Naive thymus-derived CD4-positive, alpha-beta T cell (primary cell): ENCODE measurements at regions of chr13 and their contacts with region 1.

Region 1: DNA sequence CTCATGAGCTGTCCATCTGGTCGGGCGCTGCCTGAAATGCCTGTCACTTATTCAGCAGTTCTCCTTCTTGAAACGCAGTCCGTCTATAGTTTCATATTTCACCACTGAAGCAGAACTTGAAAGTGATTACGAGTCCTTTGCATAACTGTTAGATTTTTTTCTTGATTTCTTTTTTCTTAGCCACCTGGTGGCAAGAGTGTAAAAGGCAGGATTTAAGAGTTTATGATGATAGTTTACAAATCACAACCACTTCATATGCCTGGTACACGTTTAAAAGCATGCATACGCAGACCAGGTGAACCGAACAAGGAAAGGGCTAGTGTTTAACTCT is 45.8 kb downstream of the GGACT start:
- DNase-seq: peak in 7 of 9 donors; percentile 19 to 58 (median 51)
- ATAC-seq: peak; percentile 76
- H3K4me3 ChIP-seq: no peak overlapping the region
- H3K4me3 Mint-ChIP-seq: peak overlapping the region in 9 of 10 donors; percentile 10 to 81 (median 55)
- H3K27ac ChIP-seq: no peak overlapping the region
- H3K27ac Mint-ChIP-seq: peak overlapping the region in 1 of 9 donors; percentile 19
- H3K4me1 ChIP-seq: peaks cover 0 to 22% of the 10 kb centered on the region in 2 donors
- H3K4me1 Mint-ChIP-seq: peaks cover 7 to 48% (median 31%) of the 10 kb centered on the region in 7 donors
- H3K27me3 ChIP-seq: no peaks in the 10 kb centered on the region
- H3K27me3 Mint-ChIP-seq: peaks cover 0 to 3% (median 0%) of the 10 kb centered on the region in 5 donors

Region 2: DNA sequence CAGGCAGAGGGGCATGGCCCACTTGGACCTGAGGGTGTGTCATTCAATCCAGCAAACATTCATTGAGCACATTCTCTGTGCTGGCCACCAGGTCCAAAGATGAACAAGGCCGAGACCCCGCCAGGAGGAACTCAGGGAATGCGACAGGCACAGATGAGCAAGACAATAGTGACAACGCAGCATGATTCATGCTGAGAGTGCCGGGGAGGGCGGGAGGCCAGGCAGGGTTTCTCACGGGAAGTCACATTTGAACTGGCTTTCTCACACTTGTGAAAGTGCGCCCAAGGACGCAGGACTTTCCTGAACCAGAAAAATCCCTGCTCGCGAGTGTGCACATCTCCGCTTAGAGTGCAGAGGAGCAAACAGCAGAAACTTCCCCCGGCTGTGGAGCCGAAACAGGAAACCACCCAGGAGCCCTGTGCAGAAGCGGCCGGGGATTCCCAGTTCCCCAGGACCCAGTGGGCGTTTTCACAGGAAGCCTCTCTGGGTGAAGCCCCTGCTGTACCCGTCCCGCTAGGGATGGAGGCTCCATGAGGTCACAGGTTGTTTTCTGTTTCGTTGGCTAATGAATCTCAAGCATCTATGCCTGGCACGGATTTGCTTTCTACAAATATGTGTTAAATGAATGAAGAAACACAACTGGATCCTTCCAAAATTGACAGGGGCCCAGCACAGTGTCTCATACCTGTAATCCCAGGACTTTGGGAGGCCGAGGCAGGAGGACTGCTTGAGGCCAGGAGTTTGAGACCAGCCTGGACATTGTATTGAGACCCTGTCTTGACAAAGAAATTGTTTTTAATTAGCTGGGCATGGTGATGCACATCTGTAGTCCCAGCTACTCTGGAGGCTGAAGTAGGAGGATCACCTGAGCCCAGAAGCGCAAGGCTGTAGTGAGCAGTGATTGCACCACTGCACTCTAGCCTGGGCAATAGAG is 1109.9 kb before region 1 on chr13:
- CTCF ChIA-PET with region 1: no interaction called
- POLR2A ChIA-PET with region 1: no interaction called
- intact Hi-C with region 1: no loop called
- DNase-seq: peak; percentile 50 to 96 (median 66)
- ATAC-seq: peak; percentile 63
- H3K4me3 ChIP-seq: peak overlapping the region; percentile 32
- H3K4me3 Mint-ChIP-seq: peak overlapping the region; percentile 75 to 92 (median 84)
- H3K27ac ChIP-seq: peak overlapping the region; percentile 83
- H3K27ac Mint-ChIP-seq: peak overlapping the region; percentile 85 to 98 (median 92)
- H3K4me1 ChIP-seq: peaks cover 44 to 48% of the 10 kb centered on the region in 2 donors
- H3K4me1 Mint-ChIP-seq: peaks cover 36 to 77% (median 66%) of the 10 kb centered on the region in 7 donors
- H3K27me3 ChIP-seq: no peaks in the 10 kb centered on the region
- H3K27me3 Mint-ChIP-seq: peaks cover 0 to 2% (median 0%) of the 10 kb centered on the region in 5 donors

Region 3: GRCh38 chr13:99900960-99901359 is 641.8 kb before region 1 on chr13:
- CTCF ChIA-PET with region 1: no interaction called
- POLR2A ChIA-PET with region 1: no interaction called
- intact Hi-C with region 1: loop called in 1 of 2 experiments (anchors 5 kb)
- DNase-seq: no peak
- ATAC-seq: no peak
- H3K4me3 ChIP-seq: no peak overlapping the region
- H3K4me3 Mint-ChIP-seq: no peak overlapping the region
- H3K27ac ChIP-seq: no peak overlapping the region
- H3K27ac Mint-ChIP-seq: no peak overlapping the region
- H3K4me1 ChIP-seq: peaks cover 0 to 7% of the 10 kb centered on the region in 2 donors
- H3K4me1 Mint-ChIP-seq: peaks cover 0 to 9% (median 5%) of the 10 kb centered on the region in 7 donors
- H3K27me3 ChIP-seq: peaks cover 6 to 20% of the 10 kb centered on the region in 2 donors
- H3K27me3 Mint-ChIP-seq: peaks cover 52 to 71% (median 63%) of the 10 kb centered on the region in 5 donors

Region 4: DNA sequence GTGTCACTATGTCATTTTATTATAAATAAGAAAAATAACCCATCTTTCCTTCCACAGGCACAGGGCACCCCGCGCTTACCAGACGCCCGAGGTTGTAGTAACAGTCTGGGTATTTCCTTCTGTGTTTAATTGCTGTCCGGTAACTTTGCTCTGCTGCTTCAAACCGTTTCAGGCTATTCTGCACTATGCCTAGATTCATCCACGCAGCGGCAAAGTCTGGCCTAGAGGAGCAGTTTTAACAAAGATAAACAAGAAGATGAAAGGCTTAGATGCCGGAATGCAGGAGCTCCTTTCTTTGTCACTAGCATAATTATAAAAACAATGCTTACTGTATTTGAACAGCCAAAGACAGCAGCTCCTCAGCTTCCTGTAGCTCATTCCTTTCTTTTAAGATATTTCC is 82.7 kb after region 1 on chr13:
- CTCF ChIA-PET with region 1: no interaction called
- POLR2A ChIA-PET with region 1: no interaction called
- intact Hi-C with region 1: no loop called
- DNase-seq: no peak
- ATAC-seq: no peak
- H3K4me3 ChIP-seq: no peak overlapping the region
- H3K4me3 Mint-ChIP-seq: no peak overlapping the region
- H3K27ac ChIP-seq: no peak overlapping the region
- H3K27ac Mint-ChIP-seq: no peak overlapping the region
- H3K4me1 ChIP-seq: no peaks in the 10 kb centered on the region
- H3K4me1 Mint-ChIP-seq: peaks cover 1 to 7% (median 3%) of the 10 kb centered on the region in 7 donors
- H3K27me3 ChIP-seq: no peaks in the 10 kb centered on the region
- H3K27me3 Mint-ChIP-seq: no peaks in the 10 kb centered on the region

Region 5: DNA sequence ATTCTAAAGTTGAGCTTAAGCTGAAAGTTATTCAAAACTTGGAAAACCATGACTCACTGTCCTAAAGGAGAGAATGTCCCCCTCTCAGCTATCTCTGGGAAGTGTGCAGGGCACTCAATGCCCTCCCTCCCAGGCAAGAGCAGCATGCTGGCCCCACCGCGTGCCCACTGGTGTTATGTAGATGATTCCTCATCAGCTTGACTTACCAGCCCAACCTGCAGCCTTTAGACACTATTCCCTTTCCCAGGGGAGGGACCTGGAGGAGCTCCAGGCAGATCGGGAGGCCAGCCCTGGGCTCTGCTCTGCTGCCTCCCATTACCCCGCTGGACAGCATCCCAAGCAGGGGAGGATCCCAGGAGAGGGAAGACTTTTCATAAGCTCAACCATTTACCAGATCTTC is 1734.5 kb after region 1 on chr13:
- CTCF ChIA-PET with region 1: no interaction called
- POLR2A ChIA-PET with region 1: no interaction called
- intact Hi-C with region 1: no loop called
- DNase-seq: no peak
- ATAC-seq: no peak
- H3K4me3 ChIP-seq: no peak overlapping the region
- H3K4me3 Mint-ChIP-seq: no peak overlapping the region
- H3K27ac ChIP-seq: no peak overlapping the region
- H3K27ac Mint-ChIP-seq: no peak overlapping the region
- H3K4me1 ChIP-seq: no peaks in the 10 kb centered on the region
- H3K4me1 Mint-ChIP-seq: no peaks in the 10 kb centered on the region
- H3K27me3 ChIP-seq: no peaks in the 10 kb centered on the region
- H3K27me3 Mint-ChIP-seq: peaks cover 0 to 28% (median 25%) of the 10 kb centered on the region in 5 donors